ENCODE measurements at regions of chr6 and their contacts with region 1.

Region 1: DNA sequence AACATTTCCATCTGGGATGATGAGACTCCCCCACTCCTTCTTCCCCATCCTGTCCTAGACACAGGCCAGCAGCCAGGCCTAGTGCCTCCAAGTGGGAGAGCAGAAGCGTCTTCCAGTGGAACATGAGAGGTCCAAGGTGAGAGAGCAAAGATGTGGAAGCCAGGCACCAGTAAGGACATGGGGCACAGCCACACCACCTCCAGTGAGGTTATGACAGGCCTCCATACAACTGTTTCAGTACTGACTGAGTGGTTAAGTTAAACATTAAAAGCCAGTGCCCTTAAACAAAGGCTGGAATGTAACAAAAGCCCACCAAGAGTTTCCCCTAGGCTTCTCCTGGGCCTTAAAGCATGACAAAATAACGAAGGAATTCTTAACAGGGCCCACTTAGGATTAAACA is 5.3 kb downstream of the ZBTB24 start:
- DNase-seq: peak; percentile 61
- H3K4me3 Mint-ChIP-seq: peak overlapping the region; percentile 97
- H3K27ac Mint-ChIP-seq: peak overlapping the region; percentile 88
- H3K4me1 Mint-ChIP-seq: peaks cover 66% of the 10 kb centered on the region
- H3K27me3 Mint-ChIP-seq: no peaks in the 10 kb centered on the region

Region 2: GRCh38 chr6:108872141-108872557 is 605.6 kb before region 1 on chr6:
- intact Hi-C with region 1: no loop called
- DNase-seq: no peak
- H3K4me3 Mint-ChIP-seq: no peak overlapping the region
- H3K27ac Mint-ChIP-seq: peak overlapping the region; percentile 72
- H3K4me1 Mint-ChIP-seq: peaks cover 56% of the 10 kb centered on the region
- H3K27me3 Mint-ChIP-seq: peaks cover 9% of the 10 kb centered on the region

Region 3: DNA sequence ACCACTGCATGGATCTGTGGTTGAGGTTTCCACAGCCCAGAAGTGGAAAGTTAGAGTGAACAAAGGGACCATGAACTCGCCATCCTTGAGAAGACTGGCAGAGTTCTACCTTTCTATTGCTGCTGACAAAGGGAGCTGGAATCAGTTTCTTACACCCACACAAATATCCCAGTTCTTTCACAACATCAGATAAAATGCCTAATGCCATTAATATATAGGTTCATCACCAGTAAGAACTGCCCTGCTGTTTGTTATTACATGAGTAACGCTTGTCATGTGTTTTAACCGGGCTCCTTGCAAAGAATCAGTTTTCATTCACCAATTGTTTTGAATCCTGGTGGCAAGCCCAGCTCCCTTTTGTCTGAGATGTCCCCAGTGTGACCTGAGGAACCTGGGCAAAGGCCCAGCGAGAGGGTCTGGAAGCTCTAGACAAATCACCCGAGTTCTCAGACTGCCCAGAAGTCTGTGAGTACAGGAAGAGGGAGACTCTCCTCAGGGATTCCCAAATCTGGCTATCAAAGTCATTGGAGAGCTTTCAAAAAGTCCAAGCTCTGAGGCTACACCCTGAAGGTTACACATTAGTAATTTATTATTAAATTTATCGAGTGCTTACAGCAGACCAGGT is 88.0 kb before region 1 on chr6:
- intact Hi-C with region 1: no loop called
- DNase-seq: no peak
- H3K4me3 Mint-ChIP-seq: no peak overlapping the region
- H3K27ac Mint-ChIP-seq: no peak overlapping the region
- H3K4me1 Mint-ChIP-seq: peaks cover 11% of the 10 kb centered on the region
- H3K27me3 Mint-ChIP-seq: peaks cover 7% of the 10 kb centered on the region

Region 4: GRCh38 chr6:109515781-109516409 is 38.2 kb after region 1 on chr6:
- intact Hi-C with region 1: loop called (anchors 5 kb)
- DNase-seq: peak; percentile 68
- H3K4me3 Mint-ChIP-seq: peak overlapping the region; percentile 67
- H3K27ac Mint-ChIP-seq: no peak overlapping the region
- H3K4me1 Mint-ChIP-seq: peaks cover 21% of the 10 kb centered on the region
- H3K27me3 Mint-ChIP-seq: no peaks in the 10 kb centered on the region

Measured in activated CD4-positive, alpha-beta T cell treated with anti-CD3 and anti-CD28 coated beads, Interleukin-2, amount 10 ng/mL, durations not matched to agents 24 days and 14 days (primary cell).